ENCODE measurements at regions of chr10 and their contacts with region 1.

Region 1: GRCh38 chr10:68385740-68386139 is 21.3 kb downstream of the RUFY2 start:
- DNase-seq: no peak
- H3K4me3 ChIP-seq: no peak overlapping the region
- H3K27ac ChIP-seq: no peak overlapping the region
- H3K4me1 ChIP-seq: no peaks in the 10 kb centered on the region
- H3K27me3 ChIP-seq: no peaks in the 10 kb centered on the region
- CTCF ChIP-seq: no peak

Region 2: GRCh38 chr10:68001539-68001938 is 384.2 kb before region 1 on chr10:
- CTCF ChIA-PET with region 1: no interaction called
- POLR2A ChIA-PET with region 1: interaction called, 13 read pairs
- intact Hi-C with region 1: no loop called
- DNase-seq: no peak
- H3K4me3 ChIP-seq: no peak overlapping the region
- H3K27ac ChIP-seq: no peak overlapping the region
- H3K4me1 ChIP-seq: no peaks in the 10 kb centered on the region
- H3K27me3 ChIP-seq: no peaks in the 10 kb centered on the region
- CTCF ChIP-seq: no peak

Region 3: DNA sequence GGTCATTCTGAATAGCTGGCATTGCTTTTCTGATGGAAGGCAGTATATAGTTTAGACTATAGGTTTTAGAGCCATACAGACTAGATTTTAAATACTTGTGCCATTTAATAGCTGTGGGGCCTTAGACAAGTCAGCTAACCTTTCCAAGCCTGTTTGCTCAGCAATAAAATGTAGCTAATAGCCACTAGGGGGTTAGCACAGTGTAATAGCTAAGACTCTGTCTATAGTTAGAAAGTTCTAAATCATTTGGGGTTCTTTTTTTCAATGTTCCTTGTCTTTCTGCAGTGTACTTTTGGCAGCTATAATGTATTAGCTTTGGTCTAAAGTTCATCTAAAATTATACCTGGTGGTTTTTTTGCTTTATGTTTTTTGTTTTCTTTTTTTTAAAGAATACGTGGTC is 595.3 kb after region 1 on chr10:
- CTCF ChIA-PET with region 1: interaction called, 16 read pairs
- POLR2A ChIA-PET with region 1: no interaction called
- intact Hi-C with region 1: no loop called
- DNase-seq: no peak
- H3K4me3 ChIP-seq: no peak overlapping the region
- H3K27ac ChIP-seq: no peak overlapping the region
- H3K4me1 ChIP-seq: no peaks in the 10 kb centered on the region
- H3K27me3 ChIP-seq: no peaks in the 10 kb centered on the region
- CTCF ChIP-seq: peak; percentile 42; the same call in 1 of the 2 replicates